AG04450 (cell line): ENCODE measurements at regions of chr20 and their contacts with region 1.

Region 1: GRCh38 chr20:54093423-54094267 is 23.3 kb upstream of the BCAS1 start:
- DNase-seq: no peak
- H3K4me3 ChIP-seq: no peak overlapping the region
- H3K27ac ChIP-seq: no peak overlapping the region
- H3K27me3 ChIP-seq: peaks cover 2% of the 10 kb centered on the region
- CTCF ChIP-seq: no peak

Region 2: DNA sequence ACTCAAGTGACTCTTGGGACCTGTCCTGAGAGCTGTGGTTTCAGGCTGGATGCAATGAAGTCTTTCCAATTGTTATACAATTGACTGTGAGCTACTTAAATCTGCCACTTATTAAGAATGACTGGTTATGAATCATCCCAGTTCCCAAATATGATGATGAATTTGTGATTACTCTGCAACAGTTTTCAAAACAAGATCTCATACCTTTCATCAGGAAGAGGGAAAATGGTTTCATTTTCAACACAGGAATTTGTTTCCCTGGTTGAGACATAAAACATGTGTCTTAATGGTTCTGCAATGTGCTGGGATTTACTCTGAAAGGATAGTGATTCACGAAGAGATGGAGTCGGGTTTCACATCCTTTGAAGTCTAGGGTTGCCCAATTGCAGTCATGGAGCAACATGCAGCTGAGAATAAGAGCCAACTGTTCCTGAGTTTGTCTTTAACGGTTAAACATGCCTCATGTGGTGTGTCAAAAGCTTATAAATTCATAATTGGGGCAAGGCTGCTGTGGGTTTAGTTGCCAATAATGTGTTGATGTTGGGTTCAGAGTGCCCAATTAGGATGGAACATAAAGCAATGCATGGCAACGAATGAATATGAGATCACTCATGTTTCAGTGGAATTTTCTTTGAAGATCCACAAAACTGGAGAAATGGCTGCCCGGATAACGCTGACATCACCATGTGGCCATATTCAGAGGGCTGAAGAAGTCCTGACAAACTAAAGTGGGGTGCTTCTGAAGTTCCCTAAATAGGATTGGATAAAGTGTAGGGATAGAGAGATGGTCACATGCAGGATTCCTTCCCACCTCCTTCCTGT is 39.2 kb after region 1 on chr20:
- CTCF ChIA-PET with region 1: interaction called, 17 read pairs
- POLR2A ChIA-PET with region 1: no interaction called
- DNase-seq: peak; percentile 94
- H3K4me3 ChIP-seq: no peak overlapping the region
- H3K27ac ChIP-seq: peak overlapping the region; percentile 86
- H3K27me3 ChIP-seq: no peaks in the 10 kb centered on the region
- CTCF ChIP-seq: no peak

Region 3: GRCh38 chr20:54140927-54141566 is 47.4 kb after region 1 on chr20:
- CTCF ChIA-PET with region 1: interaction called, 17 read pairs
- POLR2A ChIA-PET with region 1: no interaction called
- DNase-seq: no peak
- H3K4me3 ChIP-seq: no peak overlapping the region
- H3K27ac ChIP-seq: no peak overlapping the region
- H3K27me3 ChIP-seq: no peaks in the 10 kb centered on the region
- CTCF ChIP-seq: no peak

Region 4: GRCh38 chr20:54173653-54174456 is 80.2 kb after region 1 on chr20 and contains the start of gene CYP24A1:
- CTCF ChIA-PET with region 1: interaction called, 14 read pairs
- POLR2A ChIA-PET with region 1: no interaction called
- DNase-seq: no peak
- H3K4me3 ChIP-seq: peak within 1 kb of the TSS; percentile 31; the same call in 1 of the 2 replicates
- H3K27ac ChIP-seq: no peak within 1 kb of the TSS
- H3K27me3 ChIP-seq: peaks cover 58% of the 10 kb centered on the region
- CTCF ChIP-seq: no peak
- polyA plus RNA-seq, gene CYP24A1: 2.1 TPM in 1 of 2 replicates, not detected in the other

Region 5: DNA sequence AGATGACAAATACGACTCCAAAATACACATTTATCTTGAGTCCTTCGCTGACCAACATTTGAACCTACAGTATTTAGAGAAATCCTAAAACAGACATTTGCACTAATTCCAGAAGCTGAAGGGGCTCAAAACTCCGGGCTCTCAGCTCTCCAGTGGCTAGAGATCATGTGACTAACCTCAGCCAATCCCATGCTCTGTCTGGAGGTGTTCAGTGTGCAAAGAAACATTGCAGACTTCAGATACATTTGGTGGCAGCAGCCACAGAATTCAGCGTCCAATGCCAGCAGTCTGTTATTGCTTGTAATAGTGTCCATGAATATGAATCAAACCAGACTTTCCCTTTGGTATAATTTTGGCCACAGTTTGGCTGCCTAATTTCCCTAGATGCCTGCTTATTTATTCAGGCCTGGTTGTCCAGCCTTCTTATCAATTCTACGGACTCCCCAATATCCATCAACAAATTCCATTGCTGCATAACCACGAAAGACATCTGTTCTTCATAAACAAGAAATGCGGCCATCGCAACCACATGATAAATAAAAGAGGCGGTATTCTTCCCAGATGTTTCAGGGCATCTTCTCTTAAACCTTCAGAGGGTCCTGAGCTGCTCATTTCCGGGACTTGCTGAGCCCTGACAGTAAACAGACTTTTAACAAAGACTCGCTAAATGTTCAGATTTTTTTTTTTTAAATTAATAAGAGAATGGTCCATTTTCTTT is 94.6 kb after region 1 on chr20:
- CTCF ChIA-PET with region 1: interaction called, 951 read pairs
- POLR2A ChIA-PET with region 1: no interaction called
- DNase-seq: no peak
- H3K4me3 ChIP-seq: no peak overlapping the region
- H3K27ac ChIP-seq: no peak overlapping the region
- H3K27me3 ChIP-seq: peaks cover 6% of the 10 kb centered on the region
- CTCF ChIP-seq: no peak

Region 6: DNA sequence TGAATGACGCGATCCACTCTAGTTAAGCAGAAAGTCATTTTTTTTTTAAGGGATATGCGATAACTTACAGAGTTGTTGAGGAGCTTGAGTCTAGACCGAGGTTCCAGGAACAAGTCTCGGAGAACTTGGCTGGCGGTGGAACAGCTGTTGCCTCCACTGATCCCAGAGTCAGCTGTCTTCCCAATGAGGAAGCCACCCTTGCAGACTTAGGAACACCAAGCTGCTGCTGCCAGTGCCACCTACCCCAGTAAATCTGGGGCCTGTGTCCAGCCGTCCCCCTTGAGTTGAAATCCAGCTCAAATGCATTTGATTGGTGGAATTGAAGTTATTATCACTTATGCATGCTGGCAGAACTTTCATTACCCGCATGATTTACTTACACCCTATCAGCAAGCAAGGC is 120.9 kb after region 1 on chr20:
- CTCF ChIA-PET with region 1: interaction called, 951 read pairs
- POLR2A ChIA-PET with region 1: no interaction called
- DNase-seq: no peak
- H3K4me3 ChIP-seq: no peak overlapping the region
- H3K27ac ChIP-seq: no peak overlapping the region
- H3K27me3 ChIP-seq: no peaks in the 10 kb centered on the region
- CTCF ChIP-seq: no peak